Naive thymus-derived CD4-positive, alpha-beta T cell (primary cell): ENCODE measurements at regions of chr17 and their contacts with region 1.

Region 1: DNA sequence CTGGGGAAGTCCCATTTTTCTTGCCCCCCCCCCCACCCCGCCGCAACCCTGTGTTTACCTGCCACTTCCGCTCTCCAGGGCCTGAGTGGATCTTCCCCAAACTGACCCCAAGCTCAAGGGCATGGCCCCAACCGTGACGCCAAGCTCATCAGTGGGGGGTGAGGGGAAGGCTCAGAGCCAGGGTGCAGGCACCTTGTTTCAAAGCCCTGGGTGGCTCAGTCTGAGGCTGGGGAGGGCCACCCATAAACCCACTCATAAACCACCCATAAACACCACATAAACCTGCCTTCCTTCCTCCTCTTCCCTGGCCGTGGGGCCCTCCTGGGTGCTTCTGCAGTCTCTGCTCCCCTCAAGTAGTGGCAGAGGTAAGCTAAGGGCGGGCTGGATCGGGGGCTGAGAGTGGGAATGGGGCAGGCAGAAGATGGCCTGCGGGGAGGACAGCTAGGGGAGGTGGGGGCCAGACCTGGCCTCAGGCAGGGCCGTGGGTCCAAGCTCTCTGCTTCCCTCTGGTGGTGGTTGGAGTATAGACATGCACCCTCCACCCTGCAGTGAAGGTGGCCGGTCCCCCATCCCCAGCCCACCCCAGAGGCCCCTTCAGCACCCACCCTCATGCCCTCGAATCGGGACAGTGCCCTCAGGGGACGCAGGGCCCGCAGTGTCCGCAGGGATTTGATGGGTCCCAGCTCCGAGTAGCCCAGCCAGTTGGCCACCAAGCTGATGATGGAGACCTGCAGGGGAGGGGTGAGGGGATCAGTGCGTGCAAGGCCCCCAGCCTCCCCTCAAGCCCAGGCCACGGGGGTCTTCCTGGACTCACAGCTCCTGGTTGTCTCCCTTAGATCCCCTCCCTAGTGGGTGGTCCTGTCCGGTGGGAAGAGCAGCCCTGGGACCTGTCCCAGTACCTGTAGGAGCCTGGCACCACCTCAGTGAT is 14.6 kb upstream of the CD79B start:
- DNase-seq: peak; percentile 32 to 71 (median 53)
- ATAC-seq: peak; percentile 87
- H3K4me3 ChIP-seq: peak overlapping the region; percentile 44
- H3K4me3 Mint-ChIP-seq: peak overlapping the region; percentile 59 to 86 (median 73)
- H3K27ac ChIP-seq: no peak overlapping the region
- H3K27ac Mint-ChIP-seq: peak overlapping the region in 5 of 9 donors; percentile 25 to 85 (median 39)
- H3K4me1 ChIP-seq: peaks cover 14 to 17% of the 10 kb centered on the region in 2 donors
- H3K4me1 Mint-ChIP-seq: peaks cover 9 to 19% (median 12%) of the 10 kb centered on the region in 7 donors
- H3K27me3 ChIP-seq: no peaks in the 10 kb centered on the region
- H3K27me3 Mint-ChIP-seq: peaks cover 0 to 7% (median 0%) of the 10 kb centered on the region in 5 donors

Region 2: GRCh38 chr17:63911657-63912426 is 34.9 kb before region 1 on chr17:
- CTCF ChIA-PET with region 1: interaction called, 8 read pairs
- POLR2A ChIA-PET with region 1: no interaction called
- intact Hi-C with region 1: loop called in 1 of 2 experiments (anchors 2 kb)
- DNase-seq: peak; percentile 30 to 64 (median 49)
- ATAC-seq: peak; percentile 88
- H3K4me3 ChIP-seq: no peak overlapping the region
- H3K4me3 Mint-ChIP-seq: peak overlapping the region in 1 of 10 donors; percentile 25
- H3K27ac ChIP-seq: no peak overlapping the region
- H3K27ac Mint-ChIP-seq: peak overlapping the region in 1 of 9 donors; percentile 78
- H3K4me1 ChIP-seq: no peaks in the 10 kb centered on the region
- H3K4me1 Mint-ChIP-seq: peaks cover 0 to 10% (median 0%) of the 10 kb centered on the region in 7 donors
- H3K27me3 ChIP-seq: no peaks in the 10 kb centered on the region
- H3K27me3 Mint-ChIP-seq: peaks cover 0 to 28% (median 0%) of the 10 kb centered on the region in 5 donors

Region 3: DNA sequence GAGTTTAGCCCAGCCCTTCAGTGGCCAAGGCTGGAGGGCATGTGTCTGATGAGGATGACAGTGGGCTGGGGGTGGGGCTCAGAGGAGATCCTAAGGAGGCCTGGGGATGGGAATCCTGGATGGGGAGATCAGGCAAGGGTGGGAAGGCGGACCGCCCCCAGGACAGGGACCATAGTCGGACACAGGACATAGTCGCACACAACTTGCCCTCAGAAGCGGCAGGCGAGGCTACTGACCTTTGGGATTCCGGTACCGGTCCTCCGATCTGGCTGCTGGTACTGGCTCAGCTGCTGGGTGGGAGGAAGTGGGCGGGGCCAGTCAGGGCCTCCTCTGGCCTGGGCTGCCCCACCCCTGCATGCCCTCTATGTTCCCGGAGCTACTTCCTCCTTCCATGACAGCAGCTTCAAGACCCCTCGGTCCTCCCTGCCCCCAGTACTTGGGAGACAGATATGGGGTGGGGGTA is 15.6 kb before region 1 on chr17:
- CTCF ChIA-PET with region 1: interaction called, 12 read pairs
- POLR2A ChIA-PET with region 1: interaction called, 4 read pairs
- intact Hi-C with region 1: loop called (anchors 1 kb)
- DNase-seq: peak; percentile 29 to 56 (median 48)
- ATAC-seq: peak; percentile 82
- H3K4me3 ChIP-seq: peak overlapping the region; percentile 85
- H3K4me3 Mint-ChIP-seq: peak overlapping the region; percentile 88 to 99 (median 96)
- H3K27ac ChIP-seq: peak overlapping the region; percentile 84
- H3K27ac Mint-ChIP-seq: peak overlapping the region; percentile 87 to 96 (median 93)
- H3K4me1 ChIP-seq: peaks cover 13 to 21% of the 10 kb centered on the region in 2 donors
- H3K4me1 Mint-ChIP-seq: peaks cover 11 to 28% (median 24%) of the 10 kb centered on the region in 7 donors
- H3K27me3 ChIP-seq: no peaks in the 10 kb centered on the region
- H3K27me3 Mint-ChIP-seq: peaks cover 0 to 5% (median 0%) of the 10 kb centered on the region in 5 donors